Gastrocnemius medialis (tissue), 4 donors: ENCODE measurements at regions of chr6 and their contacts with region 1.

Region 1: DNA sequence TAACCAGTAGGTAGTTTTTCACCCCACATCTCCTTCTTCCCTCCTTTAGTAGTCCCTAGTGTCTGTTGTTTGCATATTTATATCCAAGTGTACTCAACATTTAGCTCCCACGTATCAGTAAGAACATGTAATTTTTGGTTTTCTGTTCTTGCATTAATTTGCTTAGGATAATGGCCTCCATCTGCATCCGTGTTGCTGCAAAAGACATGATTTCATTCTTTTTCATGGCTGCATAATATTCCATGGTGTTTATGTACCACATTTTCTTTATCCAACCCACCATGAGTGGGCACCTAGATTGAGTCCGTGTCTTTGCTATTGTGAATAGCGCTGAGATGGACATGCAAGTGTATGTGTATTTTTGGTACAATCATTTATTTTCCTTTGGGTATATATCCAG is 306.8 kb downstream of the NKAIN2 start:
- DNase-seq: no peak
- ATAC-seq: no peak
- H3K4me3 ChIP-seq: no peak overlapping the region
- H3K27ac ChIP-seq: no peak overlapping the region
- H3K4me1 ChIP-seq: no peaks in the 10 kb centered on the region
- H3K27me3 ChIP-seq: no peaks in the 10 kb centered on the region
- CTCF ChIP-seq: no peak
- POLR2A ChIP-seq: no peak

Region 2: GRCh38 chr6:123681957-123682462 is 428.5 kb before region 1 on chr6:
- in situ Hi-C with region 1: no loop called
- intact Hi-C with region 1: no loop called
- DNase-seq: no peak
- ATAC-seq: peak in 1 of 2 donors; percentile 40
- H3K4me3 ChIP-seq: no peak overlapping the region
- H3K27ac ChIP-seq: peak overlapping the region in 2 of 4 donors; percentile 2 to 6
- H3K4me1 ChIP-seq: peaks cover 21 to 37% of the 10 kb centered on the region in 2 donors
- H3K27me3 ChIP-seq: no peaks in the 10 kb centered on the region
- CTCF ChIP-seq: no peak
- POLR2A ChIP-seq: no peak

Region 3: DNA sequence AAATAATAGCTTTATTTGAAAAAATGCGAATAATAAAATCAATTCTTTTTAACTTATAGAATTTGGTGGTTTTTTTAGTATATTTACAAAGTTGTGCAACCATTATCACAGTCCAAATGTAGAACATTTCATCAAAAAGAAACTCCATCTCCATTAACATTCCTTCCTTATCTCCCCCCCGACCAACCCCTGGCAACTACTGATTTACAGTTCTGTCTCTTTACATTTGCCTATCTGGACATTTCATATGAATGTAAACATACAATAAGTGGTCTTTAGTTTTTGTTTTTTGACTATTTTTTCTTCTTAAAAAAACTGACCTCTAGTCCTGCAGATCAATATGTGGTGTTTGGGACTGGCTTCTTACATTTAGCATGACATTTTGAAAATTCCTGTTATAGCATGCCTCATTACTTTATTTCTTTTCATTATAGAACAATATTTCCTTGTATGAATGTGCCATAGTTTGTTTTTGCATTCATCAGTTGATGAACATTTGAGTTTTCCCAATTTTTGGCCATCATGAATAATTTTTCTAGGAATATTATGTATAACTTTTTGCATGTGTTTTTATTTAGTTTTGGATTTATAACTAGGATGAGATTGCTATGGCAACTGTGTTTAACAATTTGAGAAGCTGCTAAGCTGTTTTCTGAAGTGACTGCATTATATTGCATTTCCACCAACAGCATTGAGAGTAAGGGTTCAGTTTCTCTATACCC is 37.9 kb after region 1 on chr6:
- in situ Hi-C with region 1: loop called in 1 of 4 experiments (anchors 5 kb)
- intact Hi-C with region 1: no loop called
- DNase-seq: no peak
- ATAC-seq: no peak
- H3K4me3 ChIP-seq: no peak overlapping the region
- H3K27ac ChIP-seq: no peak overlapping the region
- H3K4me1 ChIP-seq: no peaks in the 10 kb centered on the region
- H3K27me3 ChIP-seq: no peaks in the 10 kb centered on the region
- CTCF ChIP-seq: no peak
- POLR2A ChIP-seq: no peak

Region 4: GRCh38 chr6:124334359-124334758 is 223.8 kb after region 1 on chr6:
- in situ Hi-C with region 1: no loop called
- intact Hi-C with region 1: no loop called
- DNase-seq: no peak
- ATAC-seq: no peak
- H3K4me3 ChIP-seq: no peak overlapping the region
- H3K27ac ChIP-seq: no peak overlapping the region
- H3K4me1 ChIP-seq: no peaks in the 10 kb centered on the region
- H3K27me3 ChIP-seq: no peaks in the 10 kb centered on the region
- CTCF ChIP-seq: no peak
- POLR2A ChIP-seq: no peak

Region 5: DNA sequence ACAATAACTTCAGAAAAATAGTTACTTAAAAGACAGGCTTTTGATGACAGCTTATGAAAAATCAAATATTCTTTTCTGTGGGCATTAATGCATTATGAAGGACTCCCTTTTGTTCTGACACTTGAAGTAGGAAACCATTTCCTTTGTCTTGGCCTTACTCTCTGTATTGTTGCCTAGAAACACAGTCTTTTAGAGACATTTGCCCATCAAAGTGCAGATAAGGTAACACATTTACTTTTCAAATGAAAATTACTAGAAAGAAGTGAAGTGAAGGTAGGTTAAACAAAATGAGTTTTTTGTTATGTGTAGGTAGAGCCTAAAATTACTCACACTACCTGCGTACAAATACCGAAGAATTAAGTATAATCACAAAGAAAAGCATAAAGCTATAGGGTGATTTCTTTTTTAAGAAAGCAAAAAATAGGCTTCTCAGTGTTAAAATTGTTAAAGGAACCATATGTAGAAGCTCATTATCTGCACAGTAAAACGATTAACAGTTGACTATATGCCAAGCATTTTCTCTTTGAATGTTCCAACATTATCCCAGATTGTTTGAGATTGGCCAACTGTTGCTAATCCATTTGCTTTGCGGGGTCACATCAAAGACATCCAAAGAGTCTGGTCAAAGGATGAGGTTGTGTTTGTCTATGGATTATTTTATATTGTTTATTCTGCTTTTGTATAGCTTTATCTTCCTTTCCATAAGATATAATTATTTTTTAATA is 309.8 kb after region 1 on chr6:
- in situ Hi-C with region 1: no loop called
- intact Hi-C with region 1: no loop called
- DNase-seq: no peak
- ATAC-seq: no peak
- H3K4me3 ChIP-seq: no peak overlapping the region
- H3K27ac ChIP-seq: no peak overlapping the region
- H3K4me1 ChIP-seq: no peaks in the 10 kb centered on the region
- H3K27me3 ChIP-seq: no peaks in the 10 kb centered on the region
- CTCF ChIP-seq: no peak
- POLR2A ChIP-seq: no peak